Thyroid gland (tissue), 4 donors: ENCODE measurements at regions of chr2 and their contacts with region 1.

Region 1: DNA sequence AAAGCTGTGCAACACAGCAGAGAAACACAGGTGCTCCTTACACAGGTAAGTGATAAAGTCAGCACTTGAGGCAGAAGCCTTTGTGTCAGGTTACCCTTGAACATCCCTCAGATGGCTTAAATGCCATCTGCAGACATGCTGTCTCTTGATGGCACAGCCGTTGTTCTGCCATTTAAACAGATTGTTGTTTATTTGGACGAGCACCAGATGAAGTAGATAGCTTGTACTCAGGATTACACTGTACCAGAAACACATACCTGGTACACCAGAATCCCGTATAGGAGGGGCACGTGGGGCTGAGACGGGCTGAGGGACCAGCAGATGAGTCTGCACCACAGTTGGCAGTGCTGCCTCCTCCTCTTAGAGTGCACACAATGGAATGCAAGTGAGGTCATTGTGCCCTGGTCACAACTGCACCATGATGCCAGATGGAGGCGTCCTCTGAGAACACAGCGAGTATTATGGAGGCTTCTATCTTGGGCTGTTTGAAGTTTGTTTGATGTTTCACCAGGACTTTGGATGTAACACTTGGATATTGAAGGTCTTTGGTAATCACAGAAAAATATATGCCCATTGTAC is 143.0 kb downstream of the TANC1 start:
- DNase-seq: no peak
- H3K4me3 ChIP-seq: no peak overlapping the region
- H3K27ac ChIP-seq: no peak overlapping the region
- H3K4me1 ChIP-seq: peaks cover 10% of the 10 kb centered on the region in 2 donors
- H3K27me3 ChIP-seq: no peaks in the 10 kb centered on the region
- CTCF ChIP-seq: no peak
- POLR2A ChIP-seq: no peak

Region 2: DNA sequence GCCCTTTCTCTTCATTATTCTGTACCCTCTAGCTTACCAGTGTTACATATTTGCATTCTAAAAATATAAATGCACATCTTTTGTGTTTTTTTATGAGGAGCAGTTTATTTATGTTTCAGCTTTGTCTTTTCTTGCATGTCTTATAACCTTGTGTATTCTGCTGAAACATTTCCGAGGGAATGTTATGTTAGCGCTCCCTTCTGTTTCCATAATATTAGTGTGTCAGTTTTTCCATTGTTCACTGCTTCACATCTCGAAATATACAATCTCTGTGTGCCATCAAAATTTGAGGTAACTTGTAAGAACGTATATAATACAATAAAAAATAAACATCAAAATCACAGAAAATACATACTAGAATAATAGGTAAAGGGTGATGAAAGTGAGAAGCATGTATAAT is 501.4 kb before region 1 on chr2:
- intact Hi-C with region 1: no loop called
- DNase-seq: no peak
- H3K4me3 ChIP-seq: no peak overlapping the region
- H3K27ac ChIP-seq: no peak overlapping the region
- H3K4me1 ChIP-seq: no peaks in the 10 kb centered on the region
- H3K27me3 ChIP-seq: no peaks in the 10 kb centered on the region
- CTCF ChIP-seq: no peak
- POLR2A ChIP-seq: no peak

Region 3: DNA sequence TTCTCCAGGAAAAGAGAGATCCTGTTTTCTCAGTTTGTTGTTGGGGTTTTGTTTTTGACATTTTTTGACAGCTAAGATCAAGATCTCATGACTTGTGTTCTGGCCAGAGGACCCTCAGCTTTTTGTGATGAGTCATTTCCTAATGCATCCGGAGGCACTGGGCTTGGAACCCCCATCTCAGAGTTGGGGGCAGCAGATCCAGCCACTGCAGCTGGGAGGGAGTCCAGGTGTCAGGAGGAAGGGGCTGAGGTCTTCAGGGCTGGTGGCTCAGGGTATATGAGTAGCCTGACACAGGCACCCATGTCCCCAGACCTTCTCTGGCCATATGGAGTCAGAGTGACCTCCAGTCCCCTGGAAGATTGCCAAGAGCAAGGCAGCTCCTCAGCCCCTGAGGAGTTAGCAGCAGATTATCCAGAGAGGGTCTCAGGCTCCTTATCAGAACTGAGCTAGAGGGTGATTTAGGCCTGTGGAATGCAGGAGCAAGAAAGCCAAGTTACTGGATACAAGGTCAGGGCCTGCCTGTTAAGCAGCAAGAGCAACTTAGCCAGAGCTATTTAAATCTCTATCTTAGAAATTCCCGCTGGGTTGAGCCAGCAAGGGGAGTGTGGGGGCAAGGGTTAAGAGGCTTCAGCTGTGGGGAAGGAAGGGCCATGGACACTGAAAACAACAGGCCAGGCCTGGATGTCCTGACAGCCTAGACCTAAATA is 80.6 kb before region 1 on chr2:
- intact Hi-C with region 1: loop called (anchors 5 kb)
- DNase-seq: peak; percentile 45 to 47
- H3K4me3 ChIP-seq: no peak overlapping the region
- H3K27ac ChIP-seq: peak overlapping the region; percentile 33 to 75 (median 71)
- H3K4me1 ChIP-seq: peaks cover 51 to 67% of the 10 kb centered on the region in 2 donors
- H3K27me3 ChIP-seq: no peaks in the 10 kb centered on the region
- CTCF ChIP-seq: no peak
- POLR2A ChIP-seq: no peak

Region 4: DNA sequence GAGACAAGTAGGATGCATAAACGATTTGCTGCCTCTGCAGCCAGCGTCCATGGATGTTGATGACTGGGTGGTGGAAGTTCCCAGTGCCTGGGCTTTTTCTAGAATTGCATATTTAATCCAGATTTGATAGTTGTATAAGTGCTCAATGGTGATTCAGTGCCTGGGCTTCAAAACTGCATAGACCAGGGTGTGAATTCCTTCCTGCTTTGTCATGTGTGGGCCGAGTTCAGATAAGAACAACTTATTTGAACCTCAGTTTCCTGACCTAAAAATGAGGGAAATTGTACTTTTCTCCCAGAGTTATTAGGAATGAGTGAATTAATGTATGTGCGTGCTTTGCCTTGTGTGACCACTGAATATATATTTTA is 20.5 kb after region 1 on chr2:
- intact Hi-C with region 1: no loop called
- DNase-seq: no peak
- H3K4me3 ChIP-seq: no peak overlapping the region
- H3K27ac ChIP-seq: peak overlapping the region; percentile 22 to 72 (median 53)
- H3K4me1 ChIP-seq: peaks cover 57 to 74% of the 10 kb centered on the region in 2 donors
- H3K27me3 ChIP-seq: no peaks in the 10 kb centered on the region
- CTCF ChIP-seq: no peak
- POLR2A ChIP-seq: no peak